T-cell (primary cell): ENCODE measurements at regions of chr5 and their contacts with region 1.

Region 1: DNA sequence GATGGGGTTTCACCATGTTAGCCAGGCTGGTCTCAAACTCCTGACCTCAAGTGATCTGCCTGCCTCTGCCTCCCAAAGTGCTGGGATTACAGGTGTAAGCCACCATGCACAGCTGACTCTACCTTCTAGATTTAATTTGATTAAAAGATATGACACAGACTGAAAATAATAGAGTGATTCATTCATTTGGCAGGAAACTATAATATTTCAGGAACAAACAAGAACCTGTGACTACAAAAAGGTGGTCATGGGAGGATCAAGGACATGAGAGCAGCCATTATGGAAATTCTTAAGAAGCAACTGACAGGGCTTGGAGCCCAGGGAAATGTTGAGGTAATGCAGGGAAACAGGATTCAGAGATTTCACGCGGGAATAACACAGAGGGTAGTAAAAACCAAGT is 265.5 kb upstream of the DAP start:
- DNase-seq: no peak
- ATAC-seq: no peak
- H3K4me3 ChIP-seq: no peak overlapping the region
- H3K4me3 Mint-ChIP-seq: no peak overlapping the region
- H3K27ac ChIP-seq: no peak overlapping the region
- H3K27ac Mint-ChIP-seq: no peak overlapping the region
- H3K4me1 ChIP-seq: no peaks in the 10 kb centered on the region
- H3K4me1 Mint-ChIP-seq: no peaks in the 10 kb centered on the region
- H3K27me3 ChIP-seq: no peaks in the 10 kb centered on the region
- H3K27me3 Mint-ChIP-seq: peaks cover 5 to 6% of the 10 kb centered on the region in 2 donors

Region 2: GRCh38 chr5:10934783-10935355 is 91.7 kb before region 1 on chr5:
- CTCF ChIA-PET with region 1: no interaction called
- POLR2A ChIA-PET with region 1: no interaction called
- DNase-seq: no peak
- ATAC-seq: no peak
- H3K4me3 ChIP-seq: no peak overlapping the region
- H3K4me3 Mint-ChIP-seq: no peak overlapping the region
- H3K27ac ChIP-seq: no peak overlapping the region
- H3K27ac Mint-ChIP-seq: no peak overlapping the region
- H3K4me1 ChIP-seq: no peaks in the 10 kb centered on the region
- H3K4me1 Mint-ChIP-seq: no peaks in the 10 kb centered on the region
- H3K27me3 ChIP-seq: peaks cover 0 to 15% of the 10 kb centered on the region in 2 experiments
- H3K27me3 Mint-ChIP-seq: peaks cover 3 to 4% of the 10 kb centered on the region in 2 donors

Region 3: GRCh38 chr5:10964806-10965205 is 61.7 kb before region 1 on chr5:
- CTCF ChIA-PET with region 1: no interaction called
- POLR2A ChIA-PET with region 1: no interaction called
- DNase-seq: no peak
- ATAC-seq: no peak
- H3K4me3 ChIP-seq: no peak overlapping the region
- H3K4me3 Mint-ChIP-seq: no peak overlapping the region
- H3K27ac ChIP-seq: no peak overlapping the region
- H3K27ac Mint-ChIP-seq: peak overlapping the region in 1 of 2 donors; percentile 8
- H3K4me1 ChIP-seq: peaks cover 0 to 8% of the 10 kb centered on the region in 2 experiments
- H3K4me1 Mint-ChIP-seq: peaks cover 7 to 21% (median 17%) of the 10 kb centered on the region in 3 donors
- H3K27me3 ChIP-seq: no peaks in the 10 kb centered on the region
- H3K27me3 Mint-ChIP-seq: peaks cover 0 to 3% of the 10 kb centered on the region in 2 donors

Region 4: GRCh38 chr5:11390291-11391098 is 364.0 kb after region 1 on chr5:
- CTCF ChIA-PET with region 1: interaction called in 1 of 2 experiments, 11 read pairs
- POLR2A ChIA-PET with region 1: no interaction called
- DNase-seq: no peak
- ATAC-seq: no peak
- H3K4me3 ChIP-seq: no peak overlapping the region
- H3K4me3 Mint-ChIP-seq: no peak overlapping the region
- H3K27ac ChIP-seq: no peak overlapping the region
- H3K27ac Mint-ChIP-seq: no peak overlapping the region
- H3K4me1 ChIP-seq: no peaks in the 10 kb centered on the region
- H3K4me1 Mint-ChIP-seq: peaks cover 1 to 9% (median 6%) of the 10 kb centered on the region in 3 donors
- H3K27me3 ChIP-seq: peaks cover 2 to 3% of the 10 kb centered on the region in 2 experiments
- H3K27me3 Mint-ChIP-seq: peaks cover 12 to 32% of the 10 kb centered on the region in 2 donors